Activated naive CD4-positive, alpha-beta T cell treated with anti-CD3 and anti-CD28 coated beads, Interleukin-2, amount 10 ng/mL, durations not matched to agents 7 days and 5 days (primary cell): ENCODE measurements at regions of chr12 and their contacts with region 1.

Region 1: GRCh38 chr12:57175428-57176138 is 28.2 kb upstream of the LRP1-AS start:
- DNase-seq: peak; percentile 53
- H3K4me3 Mint-ChIP-seq: no peak overlapping the region
- H3K27ac Mint-ChIP-seq: no peak overlapping the region
- H3K4me1 Mint-ChIP-seq: no peaks in the 10 kb centered on the region
- H3K27me3 Mint-ChIP-seq: peaks cover 5% of the 10 kb centered on the region

Region 2: GRCh38 chr12:56957229-56957939 is 218.2 kb before region 1 on chr12 and contains the start of gene RDH16:
- CTCF ChIA-PET with region 1: no interaction called
- DNase-seq: no peak
- H3K4me3 Mint-ChIP-seq: no peak within 1 kb of the TSS
- H3K27ac Mint-ChIP-seq: no peak within 1 kb of the TSS
- H3K4me1 Mint-ChIP-seq: no peaks in the 10 kb centered on the region
- H3K27me3 Mint-ChIP-seq: peaks cover 23% of the 10 kb centered on the region

Region 3: DNA sequence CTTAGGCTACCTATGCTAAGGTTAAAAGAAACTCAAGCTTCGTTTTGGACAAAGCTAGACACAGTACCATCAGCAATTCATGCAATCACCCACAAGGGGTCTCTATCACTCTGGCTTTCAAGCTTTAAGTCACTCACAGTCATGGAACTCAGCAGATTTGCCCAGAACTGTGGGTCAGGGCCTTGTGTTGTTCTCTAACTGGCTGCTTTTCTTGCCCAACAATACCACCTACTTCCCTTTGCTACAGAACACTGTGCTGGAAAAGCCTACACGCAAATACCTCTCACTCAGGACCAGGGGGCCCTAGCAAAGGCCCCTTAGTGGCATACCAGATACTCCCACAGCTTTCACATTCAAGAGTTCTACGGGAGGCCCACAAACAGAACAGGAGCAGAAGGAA is 106.1 kb before region 1 on chr12:
- CTCF ChIA-PET with region 1: interaction called, 13 read pairs
- DNase-seq: peak; percentile 74
- H3K4me3 Mint-ChIP-seq: no peak overlapping the region
- H3K27ac Mint-ChIP-seq: peak overlapping the region; percentile 88
- H3K4me1 Mint-ChIP-seq: peaks cover 49% of the 10 kb centered on the region
- H3K27me3 Mint-ChIP-seq: no peaks in the 10 kb centered on the region

Region 4: DNA sequence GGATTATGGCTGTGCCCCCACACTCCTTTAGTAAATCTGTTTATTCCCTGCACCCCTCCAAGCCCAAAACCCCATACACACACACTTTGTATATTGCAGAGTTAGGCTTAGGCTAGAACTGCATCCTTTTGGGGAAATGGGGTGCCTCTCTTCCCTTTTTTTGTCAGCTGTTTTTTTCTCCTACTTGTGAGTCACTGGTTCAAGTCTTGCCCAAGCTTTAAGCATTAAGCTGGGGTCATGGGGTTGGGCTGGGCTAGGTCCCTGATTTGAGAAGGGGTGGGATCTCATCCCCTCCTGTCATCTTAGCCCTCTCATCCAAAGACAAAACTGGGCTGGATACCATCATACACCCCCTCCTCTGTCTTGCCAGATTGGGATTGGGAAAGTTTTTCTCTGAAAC is 45.7 kb before region 1 on chr12:
- CTCF ChIA-PET with region 1: interaction called, 151 read pairs
- DNase-seq: no peak
- H3K4me3 Mint-ChIP-seq: peak overlapping the region; percentile 62
- H3K27ac Mint-ChIP-seq: no peak overlapping the region
- H3K4me1 Mint-ChIP-seq: peaks cover 12% of the 10 kb centered on the region
- H3K27me3 Mint-ChIP-seq: peaks cover 91% of the 10 kb centered on the region

Region 5: DNA sequence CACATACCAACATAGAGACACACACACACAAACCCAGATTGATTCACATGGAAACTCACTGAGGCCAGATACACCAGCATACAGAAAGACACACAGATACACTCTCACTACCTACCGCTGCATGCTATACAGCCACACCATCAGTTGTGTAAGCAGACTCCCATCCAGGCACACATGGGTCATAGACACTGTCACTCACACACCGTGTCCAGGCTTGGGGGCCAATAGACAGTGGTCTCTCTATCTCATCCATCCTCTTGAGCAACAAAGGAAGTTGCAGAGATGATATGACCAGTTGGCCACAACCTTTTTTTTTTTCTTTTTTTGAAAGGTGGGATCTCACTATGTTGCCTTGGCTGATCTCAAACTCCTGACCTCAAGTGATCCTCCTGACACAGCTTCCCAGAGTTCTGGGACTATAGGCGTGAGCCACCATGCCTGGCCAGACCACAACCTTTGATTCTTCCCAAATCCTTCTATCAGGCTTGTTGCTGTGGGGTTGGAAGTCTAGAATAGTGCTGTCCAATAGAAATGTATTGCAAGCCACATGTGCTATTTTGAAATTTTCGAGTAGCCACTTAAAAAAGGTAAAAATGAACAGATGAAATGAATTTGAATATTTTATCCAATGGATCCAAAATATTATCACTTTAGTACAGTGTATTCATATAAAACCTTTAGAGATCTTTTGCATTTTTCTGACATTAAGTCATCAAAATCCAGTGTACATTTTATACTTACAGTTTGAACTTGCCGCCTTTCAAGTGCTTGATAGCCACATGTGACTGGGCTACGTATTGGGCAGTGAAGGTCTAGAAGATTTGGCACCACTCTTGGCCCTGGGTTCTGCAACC is 35.6 kb before region 1 on chr12:
- CTCF ChIA-PET with region 1: no interaction called
- DNase-seq: no peak
- H3K4me3 Mint-ChIP-seq: no peak overlapping the region
- H3K27ac Mint-ChIP-seq: no peak overlapping the region
- H3K4me1 Mint-ChIP-seq: peaks cover 2% of the 10 kb centered on the region
- H3K27me3 Mint-ChIP-seq: peaks cover 16% of the 10 kb centered on the region

Region 6: DNA sequence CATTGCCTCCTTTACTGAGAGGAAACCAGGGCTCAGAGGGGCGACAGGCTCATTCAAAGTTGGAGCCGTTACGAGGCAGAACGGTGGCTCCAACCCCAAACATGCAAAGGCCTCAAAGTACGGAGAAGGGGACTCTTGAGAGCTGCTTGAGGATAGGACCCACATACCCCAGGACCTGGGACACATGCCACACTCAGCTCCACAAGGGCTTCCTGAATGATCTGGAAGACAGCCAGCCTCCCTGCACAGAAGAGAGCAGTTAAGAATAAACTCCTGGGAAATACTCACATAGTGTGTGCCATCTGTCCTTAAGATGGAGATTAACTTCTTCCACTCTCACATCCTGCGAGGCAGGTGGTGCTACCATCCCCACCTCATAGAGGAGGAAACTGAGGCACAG is 14.5 kb after region 1 on chr12:
- CTCF ChIA-PET with region 1: interaction called, 12 read pairs
- DNase-seq: no peak
- H3K4me3 Mint-ChIP-seq: no peak overlapping the region
- H3K27ac Mint-ChIP-seq: no peak overlapping the region
- H3K4me1 Mint-ChIP-seq: no peaks in the 10 kb centered on the region
- H3K27me3 Mint-ChIP-seq: peaks cover 3% of the 10 kb centered on the region

Region 7: DNA sequence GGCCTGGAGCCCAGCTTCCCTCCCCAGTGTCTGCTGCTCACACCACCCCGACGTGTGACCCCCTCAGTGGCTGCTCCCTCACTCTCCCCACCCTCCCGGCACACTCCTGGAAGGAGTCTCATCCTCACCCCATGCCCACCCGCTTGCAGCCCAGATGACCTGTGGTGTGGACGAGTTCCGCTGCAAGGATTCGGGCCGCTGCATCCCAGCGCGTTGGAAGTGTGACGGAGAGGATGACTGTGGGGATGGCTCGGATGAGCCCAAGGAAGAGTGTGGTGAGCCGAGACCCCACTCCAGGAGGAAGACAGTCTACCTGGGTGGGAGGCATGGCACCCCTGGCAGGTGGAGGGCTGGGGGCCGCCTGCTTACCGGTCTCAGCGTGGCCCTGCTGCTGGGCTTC is 26.0 kb after region 1 on chr12:
- CTCF ChIA-PET with region 1: no interaction called
- DNase-seq: no peak
- H3K4me3 Mint-ChIP-seq: no peak overlapping the region
- H3K27ac Mint-ChIP-seq: no peak overlapping the region
- H3K4me1 Mint-ChIP-seq: no peaks in the 10 kb centered on the region
- H3K27me3 Mint-ChIP-seq: no peaks in the 10 kb centered on the region